Activated CD8-positive, alpha-beta T cell treated with anti-CD3 and anti-CD28 coated beads, Interleukin-2, amount 10 ng/mL, durations not matched to agents 7 days and 5 days (primary cell): ENCODE measurements at regions of chr1 and their contacts with region 1.

Region 1: GRCh38 chr1:100351095-100351891 is 1.0 kb upstream of the CDC14A start:
- DNase-seq: peak; percentile 90
- ATAC-seq: peak; percentile 78
- H3K4me3 Mint-ChIP-seq: peak overlapping the region; percentile 96
- H3K27ac Mint-ChIP-seq: peak overlapping the region; percentile 99
- H3K4me1 Mint-ChIP-seq: peaks cover 31% of the 10 kb centered on the region
- H3K27me3 Mint-ChIP-seq: no peaks in the 10 kb centered on the region

Region 2: DNA sequence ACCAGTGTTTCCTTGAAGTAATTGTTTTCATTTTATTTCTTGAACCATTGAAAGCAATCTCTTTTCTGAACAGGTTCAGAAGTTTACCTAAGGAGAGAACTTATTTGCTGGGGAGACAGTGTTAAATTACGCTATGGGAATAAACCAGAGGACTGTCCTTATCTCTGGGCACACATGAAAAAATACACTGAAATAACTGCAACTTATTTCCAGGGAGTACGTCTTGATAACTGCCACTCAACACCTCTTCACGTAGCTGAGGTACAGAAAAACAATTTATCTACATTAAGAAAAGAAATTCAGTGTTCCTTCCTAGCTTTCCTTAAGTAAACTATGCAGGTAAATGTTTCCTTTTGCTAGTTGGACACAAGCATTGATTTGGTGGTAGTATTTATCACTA is 473.7 kb before region 1 on chr1:
- CTCF ChIA-PET with region 1: no interaction called
- POLR2A ChIA-PET with region 1: no interaction called
- DNase-seq: no peak
- ATAC-seq: no peak
- H3K4me3 Mint-ChIP-seq: no peak overlapping the region
- H3K27ac Mint-ChIP-seq: no peak overlapping the region
- H3K4me1 Mint-ChIP-seq: no peaks in the 10 kb centered on the region
- H3K27me3 Mint-ChIP-seq: no peaks in the 10 kb centered on the region

Region 3: DNA sequence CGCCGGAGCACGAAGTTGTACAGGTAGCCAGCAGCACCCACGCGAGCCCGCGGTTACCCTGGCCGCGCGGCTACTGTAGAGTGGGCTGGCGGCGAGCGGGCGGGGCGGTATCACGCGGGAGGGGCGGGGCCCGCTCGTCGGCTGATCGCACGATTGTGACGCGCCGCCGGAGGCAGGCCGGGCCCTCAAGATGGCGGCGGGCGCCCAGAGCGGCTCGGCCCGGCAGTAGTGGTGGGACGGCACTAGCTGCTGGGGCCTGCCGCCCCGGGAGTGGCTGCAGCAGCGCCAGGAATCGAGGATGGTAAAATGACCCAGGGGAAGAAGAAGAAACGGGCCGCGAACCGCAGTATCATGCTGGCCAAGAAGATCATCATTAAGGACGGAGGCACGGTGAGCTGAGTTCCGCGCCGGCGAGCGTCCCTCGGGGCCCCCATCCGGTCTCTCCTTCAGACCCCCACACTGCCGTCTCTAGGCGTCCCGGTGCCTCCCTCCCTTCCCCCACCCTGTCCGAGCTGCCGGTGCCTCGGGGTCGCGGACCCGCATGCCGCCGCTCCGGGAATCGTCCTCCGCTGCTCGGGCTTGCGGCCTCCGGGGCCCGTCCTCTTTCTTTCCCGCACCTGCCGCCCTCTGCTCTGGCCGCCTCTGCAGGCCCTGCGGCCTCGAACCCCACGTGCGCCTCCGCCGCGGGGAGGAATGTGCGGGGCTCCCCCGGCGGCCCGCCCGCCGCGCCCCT is 313.2 kb before region 1 on chr1:
- CTCF ChIA-PET with region 1: no interaction called
- POLR2A ChIA-PET with region 1: interaction called, 15 read pairs
- DNase-seq: peak; percentile 92
- ATAC-seq: peak; percentile 86
- H3K4me3 Mint-ChIP-seq: peak overlapping the region; percentile 97
- H3K27ac Mint-ChIP-seq: peak overlapping the region; percentile 99
- H3K4me1 Mint-ChIP-seq: peaks cover 51% of the 10 kb centered on the region
- H3K27me3 Mint-ChIP-seq: no peaks in the 10 kb centered on the region

Region 4: GRCh38 chr1:100265931-100266740 is 85.2 kb before region 1 on chr1 and contains the start of gene RTCA:
- CTCF ChIA-PET with region 1: interaction called, 5 read pairs
- POLR2A ChIA-PET with region 1: interaction called, 25 read pairs
- DNase-seq: peak; percentile 96
- ATAC-seq: peak; percentile 94
- H3K4me3 Mint-ChIP-seq: peak within 1 kb of the TSS; percentile 100
- H3K27ac Mint-ChIP-seq: peak within 1 kb of the TSS; percentile 99
- H3K4me1 Mint-ChIP-seq: peaks cover 38% of the 10 kb centered on the region
- H3K27me3 Mint-ChIP-seq: no peaks in the 10 kb centered on the region
- total RNA-seq, gene RTCA: 51.6 to 51.7 TPM

Region 5: GRCh38 chr1:100335436-100335835 is 15.9 kb before region 1 on chr1:
- CTCF ChIA-PET with region 1: no interaction called
- POLR2A ChIA-PET with region 1: no interaction called
- DNase-seq: no peak
- ATAC-seq: no peak
- H3K4me3 Mint-ChIP-seq: no peak overlapping the region
- H3K27ac Mint-ChIP-seq: no peak overlapping the region
- H3K4me1 Mint-ChIP-seq: no peaks in the 10 kb centered on the region
- H3K27me3 Mint-ChIP-seq: peaks cover 3% of the 10 kb centered on the region

Region 6: DNA sequence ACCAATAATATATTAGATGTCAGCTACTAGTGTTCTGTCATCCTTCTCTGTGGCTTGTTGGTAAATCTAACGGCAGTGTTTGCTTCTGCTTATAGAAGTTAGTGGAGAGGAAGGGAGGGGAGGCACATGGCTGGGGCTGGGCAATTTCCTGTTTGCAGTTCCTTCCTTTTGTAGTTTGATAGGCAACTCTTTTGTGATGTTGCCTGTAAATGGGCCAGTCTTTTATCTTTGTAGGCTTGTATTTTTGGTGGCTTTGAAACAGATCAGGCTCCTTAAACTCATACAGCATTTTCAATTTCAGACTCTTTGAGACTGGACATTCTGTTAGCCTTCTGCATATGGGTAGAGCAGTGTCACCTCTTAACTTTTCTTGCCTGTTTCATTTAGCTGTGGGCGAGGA is 49.1 kb after region 1 on chr1:
- CTCF ChIA-PET with region 1: interaction called, 20 read pairs
- POLR2A ChIA-PET with region 1: interaction called, 39 read pairs
- DNase-seq: peak; percentile 85
- ATAC-seq: peak; percentile 90
- H3K4me3 Mint-ChIP-seq: peak overlapping the region; percentile 58
- H3K27ac Mint-ChIP-seq: peak overlapping the region; percentile 91
- H3K4me1 Mint-ChIP-seq: peaks cover 85% of the 10 kb centered on the region
- H3K27me3 Mint-ChIP-seq: no peaks in the 10 kb centered on the region

Region 7: GRCh38 chr1:100443811-100444571 is 92.7 kb after region 1 on chr1:
- CTCF ChIA-PET with region 1: interaction called, 3 read pairs
- POLR2A ChIA-PET with region 1: interaction called, 50 read pairs
- DNase-seq: peak; percentile 43
- ATAC-seq: peak; percentile 48
- H3K4me3 Mint-ChIP-seq: peak overlapping the region; percentile 60
- H3K27ac Mint-ChIP-seq: peak overlapping the region; percentile 90
- H3K4me1 Mint-ChIP-seq: peaks cover 81% of the 10 kb centered on the region
- H3K27me3 Mint-ChIP-seq: no peaks in the 10 kb centered on the region